ENCODE measurements at regions of chr19 and their contacts with region 1.

Region 1: GRCh38 chr19:47243776-47244547 is 12.4 kb upstream of the CCDC9 start:
- DNase-seq: peak; percentile 95 to 98 (median 98)
- H3K4me3 ChIP-seq: peak overlapping the region in 1 of 3 experiments; percentile 43
- H3K4me3 Mint-ChIP-seq: peak overlapping the region; percentile 71 to 92
- H3K27ac ChIP-seq: peak overlapping the region; percentile 59 to 60
- H3K27ac Mint-ChIP-seq: peak overlapping the region in 5 of 7 donors; percentile 79 to 94 (median 91)
- H3K4me1 ChIP-seq: peaks cover 36 to 46% of the 10 kb centered on the region in 2 donors
- H3K4me1 Mint-ChIP-seq: peaks cover 30% of the 10 kb centered on the region
- H3K27me3 ChIP-seq: peaks cover 27 to 42% of the 10 kb centered on the region in 2 donors
- H3K27me3 Mint-ChIP-seq: peaks cover 12 to 29% (median 28%) of the 10 kb centered on the region in 3 donors
- CTCF ChIP-seq: peak; percentile 98

Region 2: GRCh38 chr19:47152224-47153017 is 91.5 kb before region 1 on chr19:
- intact Hi-C with region 1: loop called (anchors 1 to 2 kb)
- DNase-seq: no peak
- H3K4me3 ChIP-seq: no peak overlapping the region
- H3K4me3 Mint-ChIP-seq: no peak overlapping the region
- H3K27ac ChIP-seq: no peak overlapping the region
- H3K27ac Mint-ChIP-seq: peak overlapping the region in 1 of 7 donors; percentile 73
- H3K4me1 ChIP-seq: peaks cover 17 to 18% of the 10 kb centered on the region in 2 donors
- H3K4me1 Mint-ChIP-seq: peaks cover 18% of the 10 kb centered on the region
- H3K27me3 ChIP-seq: no peaks in the 10 kb centered on the region
- H3K27me3 Mint-ChIP-seq: peaks cover 0 to 2% (median 1%) of the 10 kb centered on the region in 3 donors
- CTCF ChIP-seq: no peak

Region 3: GRCh38 chr19:47225746-47226425 is 18.1 kb before region 1 on chr19:
- intact Hi-C with region 1: loop called (anchors 1 to 2 kb)
- DNase-seq: peak; percentile 84 to 91 (median 87)
- H3K4me3 ChIP-seq: peak overlapping the region; percentile 51 to 99 (median 70)
- H3K4me3 Mint-ChIP-seq: peak overlapping the region; percentile 87 to 88
- H3K27ac ChIP-seq: peak overlapping the region; percentile 86 to 96
- H3K27ac Mint-ChIP-seq: peak overlapping the region; percentile 62 to 99 (median 97)
- H3K4me1 ChIP-seq: peaks cover 40 to 50% of the 10 kb centered on the region in 2 donors
- H3K4me1 Mint-ChIP-seq: peaks cover 12% of the 10 kb centered on the region
- H3K27me3 ChIP-seq: no peaks in the 10 kb centered on the region
- H3K27me3 Mint-ChIP-seq: peaks cover 0 to 2% (median 0%) of the 10 kb centered on the region in 3 donors
- CTCF ChIP-seq: peak; percentile 71

Region 4: DNA sequence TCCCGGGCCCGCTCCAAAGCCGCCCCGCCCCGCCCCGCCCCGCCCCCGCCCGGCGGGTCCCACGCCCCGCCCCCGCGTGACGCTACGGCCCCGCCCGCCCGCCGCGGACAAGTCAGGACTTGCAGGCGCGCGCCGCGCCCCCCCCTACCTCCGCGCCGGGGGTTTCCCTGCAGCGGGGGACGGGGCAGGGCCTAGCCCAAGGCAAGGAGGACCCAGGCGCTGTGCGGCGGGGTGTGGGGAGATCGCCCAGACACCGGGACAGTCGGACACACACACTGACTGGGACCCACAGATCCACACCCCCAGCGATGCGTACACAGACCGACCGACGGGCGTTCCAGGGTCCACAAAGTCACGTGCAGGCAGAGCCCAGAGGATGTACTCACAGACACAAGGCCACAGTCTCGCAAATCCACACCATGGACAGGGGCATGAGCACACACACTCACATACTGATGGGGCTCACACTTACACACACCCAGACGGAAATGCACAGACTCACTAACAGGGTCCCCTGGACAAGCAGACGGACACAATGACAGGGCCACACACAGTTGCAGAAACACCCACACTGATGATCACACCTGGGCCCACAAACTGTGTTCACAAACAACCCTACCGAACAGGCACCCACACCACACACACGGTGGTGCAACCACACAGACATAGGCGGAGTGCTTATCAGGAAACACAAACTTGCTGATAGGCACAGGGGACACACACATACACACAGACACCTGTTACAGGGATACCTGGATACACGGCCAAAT is 12.6 kb before region 1 on chr19:
- intact Hi-C with region 1: loop called (anchors 1 to 2 kb)
- DNase-seq: peak; percentile 76 to 91 (median 87)
- H3K4me3 ChIP-seq: peak overlapping the region; percentile 47 to 99 (median 50)
- H3K4me3 Mint-ChIP-seq: peak overlapping the region; percentile 81 to 92
- H3K27ac ChIP-seq: peak overlapping the region; percentile 20 to 78
- H3K27ac Mint-ChIP-seq: peak overlapping the region; percentile 50 to 92 (median 85)
- H3K4me1 ChIP-seq: peaks cover 47 to 53% of the 10 kb centered on the region in 2 donors
- H3K4me1 Mint-ChIP-seq: peaks cover 24% of the 10 kb centered on the region
- H3K27me3 ChIP-seq: peaks cover 0 to 20% of the 10 kb centered on the region in 2 donors
- H3K27me3 Mint-ChIP-seq: peaks cover 29 to 46% (median 36%) of the 10 kb centered on the region in 3 donors
- CTCF ChIP-seq: no peak

Measured in CD14-positive monocyte (primary cell).